PC-3 (cell line): ENCODE measurements at regions of chr5 and their contacts with region 1.

Region 1: GRCh38 chr5:69261034-69261433 is 26.3 kb downstream of the CDK7 start:
- DNase-seq: peak; percentile 19
- ATAC-seq: peak; percentile 80
- H3K4me3 ChIP-seq: no peak overlapping the region
- H3K27ac ChIP-seq: 0 out of 2 replicates have a peak overlapping the region, but pooled peaks have one; percentile 25
- H3K4me1 ChIP-seq: no peaks in the 10 kb centered on the region; the same call in none of the 2 replicates
- H3K27me3 ChIP-seq: no peaks in the 10 kb centered on the region
- CTCF ChIP-seq: no peak

Region 2: DNA sequence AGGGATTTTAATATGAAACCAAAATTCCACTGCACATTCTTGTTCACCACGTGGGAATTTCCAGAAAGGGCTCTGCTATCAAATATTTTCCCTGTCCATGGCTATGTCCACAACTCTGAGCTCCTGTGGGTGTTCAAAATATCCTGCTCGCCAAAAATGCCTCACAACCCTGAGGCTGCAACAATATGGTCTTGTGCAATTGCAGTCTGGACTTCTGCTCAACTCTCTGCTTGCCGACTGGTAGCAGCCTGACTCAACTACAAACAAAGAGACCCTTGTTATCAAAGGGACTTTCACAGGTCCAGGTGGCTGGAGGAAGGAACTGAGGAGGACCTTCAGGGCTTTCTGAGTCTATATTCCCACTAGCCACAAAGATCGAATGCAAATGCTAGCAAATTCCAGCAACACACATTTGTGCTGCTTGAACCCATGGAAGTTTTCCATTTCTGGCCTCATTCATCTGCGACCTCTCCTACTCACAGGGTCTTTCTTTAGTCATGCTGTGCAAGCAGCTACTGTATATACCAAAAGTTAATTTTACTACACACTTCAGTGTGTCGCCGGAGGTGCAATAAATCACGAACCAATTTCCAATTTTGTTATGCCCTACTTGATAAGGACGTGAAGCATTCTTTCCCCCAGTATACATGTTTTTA is 336.4 kb before region 1 on chr5:
- CTCF ChIA-PET with region 1: no interaction called
- POLR2A ChIA-PET with region 1: no interaction called
- intact Hi-C with region 1: no loop called
- DNase-seq: peak; percentile 25
- ATAC-seq: no peak
- H3K4me3 ChIP-seq: no peak overlapping the region
- H3K27ac ChIP-seq: no peak overlapping the region
- H3K4me1 ChIP-seq: peaks cover 10% of the 10 kb centered on the region; the same call in 1 of the 2 replicates
- H3K27me3 ChIP-seq: no peaks in the 10 kb centered on the region
- CTCF ChIP-seq: no peak

Region 3: GRCh38 chr5:69271376-69271775 is 10.3 kb after region 1 on chr5:
- CTCF ChIA-PET with region 1: no interaction called
- POLR2A ChIA-PET with region 1: interaction called, 16 read pairs
- intact Hi-C with region 1: no loop called
- DNase-seq: peak; percentile 2
- ATAC-seq: no peak
- H3K4me3 ChIP-seq: no peak overlapping the region
- H3K27ac ChIP-seq: no peak overlapping the region
- H3K4me1 ChIP-seq: no peaks in the 10 kb centered on the region
- H3K27me3 ChIP-seq: no peaks in the 10 kb centered on the region
- CTCF ChIP-seq: no peak